ENCODE measurements at regions of chr10 and their contacts with region 1.

Region 1: GRCh38 chr10:95246579-95247051 is 44.2 kb downstream of the PDLIM1 start:
- DNase-seq: peak; percentile 69 to 87
- H3K4me3 ChIP-seq: no peak overlapping the region
- H3K27ac ChIP-seq: peak overlapping the region; percentile 68 to 73
- H3K4me1 ChIP-seq: no peaks in the 10 kb centered on the region
- H3K27me3 ChIP-seq: no peaks in the 10 kb centered on the region
- CTCF ChIP-seq: peak; percentile 77 to 90 (median 84)
- POLR2A ChIP-seq: no peak

Region 2: GRCh38 chr10:95363303-95363912 is 116.8 kb after region 1 on chr10:
- intact Hi-C with region 1: loop called (anchors 5 kb)
- DNase-seq: peak in 1 of 2 donors; percentile 49
- H3K4me3 ChIP-seq: no peak overlapping the region
- H3K27ac ChIP-seq: no peak overlapping the region
- H3K4me1 ChIP-seq: peaks cover 0 to 3% of the 10 kb centered on the region in 2 donors
- H3K27me3 ChIP-seq: no peaks in the 10 kb centered on the region
- CTCF ChIP-seq: peak; percentile 83 to 95 (median 92)
- POLR2A ChIP-seq: no peak

Region 3: DNA sequence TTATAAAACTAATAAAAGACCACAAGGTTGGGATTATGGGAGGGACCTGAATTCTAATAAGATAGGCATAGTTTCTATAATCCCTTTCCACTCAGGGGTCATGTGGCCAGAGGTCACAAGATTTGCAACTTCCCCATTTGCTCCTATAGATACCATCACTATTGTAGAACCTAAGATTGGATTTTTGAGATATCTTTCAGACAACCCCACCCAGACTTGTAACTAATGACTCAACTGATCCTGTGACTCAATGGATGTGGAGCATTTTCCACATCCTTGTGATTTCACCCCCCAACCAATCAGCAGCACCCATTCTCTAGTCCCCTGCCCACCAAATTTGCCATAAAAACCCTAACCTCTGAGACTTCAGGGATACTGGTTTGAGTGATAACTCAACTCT is 1525.6 kb after region 1 on chr10:
- intact Hi-C with region 1: no loop called
- DNase-seq: no peak
- H3K4me3 ChIP-seq: no peak overlapping the region
- H3K27ac ChIP-seq: no peak overlapping the region
- H3K4me1 ChIP-seq: no peaks in the 10 kb centered on the region
- H3K27me3 ChIP-seq: no peaks in the 10 kb centered on the region
- CTCF ChIP-seq: no peak
- POLR2A ChIP-seq: no peak